ENCODE measurements at regions of chr11 and their contacts with region 1.

Region 1: GRCh38 chr11:72787216-72788104 is 6.4 kb downstream of the STARD10 start:
- DNase-seq: peak; percentile 54 to 82
- H3K4me3 ChIP-seq: no peak overlapping the region
- H3K27ac ChIP-seq: no peak overlapping the region
- H3K4me1 ChIP-seq: peaks cover 0 to 7% (median 2%) of the 10 kb centered on the region in 4 experiments; a peak in 6 of 7 replicates
- H3K27me3 ChIP-seq: no peaks in the 10 kb centered on the region
- CTCF ChIP-seq: peak; percentile 49 to 78 (median 61)
- EP300 ChIP-seq: no peak
- POLR2A ChIP-seq: no peak
- RAD21 ChIP-seq: peak in 1 of 2 experiments; percentile 50; a peak in 2 of 4 replicates

Region 2: GRCh38 chr11:72762641-72763304 is 24.7 kb before region 1 on chr11:
- CTCF ChIA-PET with region 1: interaction called, 21 read pairs
- POLR2A ChIA-PET with region 1: interaction called, 4 read pairs
- DNase-seq: no peak
- H3K4me3 ChIP-seq: no peak overlapping the region
- H3K27ac ChIP-seq: no peak overlapping the region
- H3K4me1 ChIP-seq: peaks cover 0 to 14% (median 8%) of the 10 kb centered on the region in 4 experiments; a peak in 6 of 7 replicates
- H3K27me3 ChIP-seq: no peaks in the 10 kb centered on the region
- CTCF ChIP-seq: no peak
- EP300 ChIP-seq: no peak
- POLR2A ChIP-seq: no peak
- RAD21 ChIP-seq: no peak

Region 3: GRCh38 chr11:72772978-72773690 is 14.3 kb before region 1 on chr11:
- CTCF ChIA-PET with region 1: interaction called, 50 read pairs
- POLR2A ChIA-PET with region 1: interaction called, 5 read pairs
- DNase-seq: no peak
- H3K4me3 ChIP-seq: no peak overlapping the region
- H3K27ac ChIP-seq: no peak overlapping the region
- H3K4me1 ChIP-seq: peaks cover 0 to 8% (median 7%) of the 10 kb centered on the region in 4 experiments; a peak in 4 of 7 replicates
- H3K27me3 ChIP-seq: no peaks in the 10 kb centered on the region
- CTCF ChIP-seq: no peak
- EP300 ChIP-seq: no peak
- POLR2A ChIP-seq: no peak
- RAD21 ChIP-seq: no peak

Region 4: DNA sequence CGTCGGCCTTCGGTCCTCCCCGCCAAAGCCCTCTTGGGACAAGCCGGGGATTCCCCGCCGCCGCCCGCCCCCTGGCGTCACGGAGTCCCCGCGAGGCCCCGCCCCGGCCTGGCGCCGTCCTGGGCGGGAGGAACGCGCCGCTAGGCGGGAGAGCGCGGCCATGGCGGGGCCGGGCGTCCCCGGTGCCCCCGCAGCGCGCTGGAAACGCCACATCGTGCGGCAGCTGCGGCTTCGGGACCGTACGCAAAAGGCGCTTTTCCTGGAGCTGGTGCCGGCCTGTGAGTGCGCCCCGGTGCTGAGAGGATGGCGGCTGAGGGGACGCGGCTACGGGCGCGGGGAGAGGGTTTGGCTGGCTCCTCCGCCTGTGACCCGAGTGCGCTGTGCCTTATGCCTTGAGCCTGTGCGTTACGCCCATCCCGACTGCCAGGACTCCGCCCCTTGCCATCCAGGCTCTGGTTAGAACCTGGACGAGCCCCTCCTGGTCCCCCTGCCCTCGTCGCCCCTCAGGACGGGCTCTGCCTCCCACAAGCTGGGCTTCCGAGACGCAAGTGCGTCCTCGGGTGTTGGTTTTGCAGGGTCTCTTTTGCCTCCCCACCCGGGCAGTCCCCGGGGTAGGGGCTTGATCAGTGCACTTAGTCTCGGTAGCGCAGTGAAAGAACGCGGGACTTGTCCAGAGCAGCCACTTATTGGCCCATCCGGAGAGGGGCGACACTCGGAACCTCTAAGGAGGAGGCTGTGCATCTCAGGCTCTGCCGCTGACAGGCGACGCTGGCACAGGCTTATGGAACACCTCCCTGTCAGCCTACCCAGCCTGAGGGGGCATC is 27.0 kb after region 1 on chr11 and contains the start of gene ATG16L2:
- CTCF ChIA-PET with region 1: interaction called, 51 read pairs
- POLR2A ChIA-PET with region 1: interaction called, 3 read pairs
- DNase-seq: peak; percentile 50 to 93
- H3K4me3 ChIP-seq: peak within 1 kb of the TSS; percentile 58 to 84 (median 79)
- H3K27ac ChIP-seq: peak within 1 kb of the TSS; percentile 93
- H3K4me1 ChIP-seq: peaks cover 0 to 15% (median 9%) of the 10 kb centered on the region in 4 experiments; a peak in 5 of 7 replicates
- H3K27me3 ChIP-seq: peaks cover 0 to 7% (median 4%) of the 10 kb centered on the region in 4 experiments; a peak in 4 of 7 replicates
- CTCF ChIP-seq: peak in 1 of 3 experiments; percentile 17; a peak in 2 of 4 replicates
- EP300 ChIP-seq: no peak
- POLR2A ChIP-seq: peak in 1 of 2 experiments; percentile 91; a peak in 2 of 3 replicates
- RAD21 ChIP-seq: peak; percentile 1 to 37; a peak in 1 of 4 replicates
- total RNA-seq, gene ATG16L2: 11.0 and 11.7 TPM in 2 replicates

Region 5: DNA sequence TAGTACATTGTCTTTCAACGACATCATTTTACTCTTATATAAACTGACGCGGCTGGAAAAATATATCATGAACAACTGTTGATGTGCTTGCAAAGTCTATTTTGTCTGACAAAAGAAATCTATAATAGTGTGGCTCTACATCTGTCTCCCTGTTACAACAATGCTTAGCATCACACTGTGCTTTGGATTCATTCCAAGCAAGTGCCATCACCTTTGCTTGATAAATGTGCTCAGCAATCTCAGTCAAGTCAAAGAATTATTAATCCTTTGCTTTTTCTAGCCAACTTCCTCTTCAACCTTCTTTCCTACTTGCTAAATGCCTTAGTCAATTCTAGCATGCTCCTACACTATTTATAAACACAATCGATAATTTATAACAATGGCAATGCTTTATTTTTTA is 214.2 kb after region 1 on chr11:
- CTCF ChIA-PET with region 1: no interaction called
- POLR2A ChIA-PET with region 1: no interaction called
- DNase-seq: no peak
- H3K4me3 ChIP-seq: no peak overlapping the region
- H3K27ac ChIP-seq: no peak overlapping the region
- H3K4me1 ChIP-seq: no peaks in the 10 kb centered on the region
- H3K27me3 ChIP-seq: no peaks in the 10 kb centered on the region
- CTCF ChIP-seq: no peak
- EP300 ChIP-seq: no peak
- POLR2A ChIP-seq: no peak
- RAD21 ChIP-seq: no peak